Endothelial cell of umbilical vein (primary cell): ENCODE measurements at regions of chr10 and their contacts with region 1.

Region 1: DNA sequence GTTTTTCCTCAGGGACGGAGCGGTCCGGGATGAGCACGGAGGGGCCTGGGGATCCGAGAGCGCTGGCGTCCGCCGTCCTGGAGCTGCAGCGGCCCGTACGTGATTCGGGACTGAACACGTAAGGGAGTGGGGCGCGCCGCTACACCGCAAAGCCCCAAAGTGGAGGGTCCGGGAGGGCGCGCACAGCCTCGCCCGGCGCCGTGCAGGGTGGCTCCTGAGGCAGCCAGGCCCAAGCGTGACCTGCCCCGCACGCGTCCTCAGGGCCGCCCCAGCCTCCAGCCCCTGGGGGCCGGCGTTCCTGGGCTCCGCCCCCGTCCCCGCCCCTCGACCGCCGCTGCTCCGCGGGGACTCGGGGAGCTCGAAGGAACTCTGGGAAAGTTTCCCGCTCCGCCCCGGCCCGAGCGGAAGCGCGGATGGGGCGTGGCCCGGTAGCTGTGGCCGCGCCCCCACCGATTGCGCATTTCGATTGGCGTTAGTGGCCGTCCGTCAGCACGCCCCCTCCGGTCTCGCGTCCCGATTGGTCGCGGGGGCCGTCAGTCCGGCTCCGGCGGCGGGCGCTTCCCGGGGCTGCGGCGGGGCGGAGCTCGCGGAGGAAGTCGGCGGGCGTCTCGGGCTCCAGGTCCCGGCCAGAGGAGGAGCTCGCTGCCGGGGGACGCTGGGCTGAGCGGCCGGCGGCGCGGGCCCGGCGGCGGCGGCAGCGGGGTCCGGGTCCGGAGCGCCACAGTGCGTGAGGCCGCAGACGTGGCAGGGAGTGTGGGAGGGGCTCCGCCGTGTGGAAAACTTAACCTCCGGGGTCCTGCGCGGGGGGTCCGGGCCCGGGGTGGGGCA is at the starts of genes ANKRD16 and FBH1:
- DNase-seq: peak; percentile 99
- H3K4me3 ChIP-seq: peak within 1 kb of the TSS; percentile 16 to 95 (median 62)
- H3K27ac ChIP-seq: peak within 1 kb of the TSS; percentile 44
- H3K4me1 ChIP-seq: peaks cover 36% of the 10 kb centered on the region
- H3K27me3 ChIP-seq: no peaks in the 10 kb centered on the region
- CTCF ChIP-seq: no peak
- POLR2A ChIP-seq: peak; percentile 82
- total RNA-seq, gene ANKRD16: 4.4 and 6.9 TPM in 2 replicates
- total RNA-seq, gene FBH1: 86.1 and 97.0 TPM in 2 replicates

Region 2: GRCh38 chr10:5873515-5873995 is 16.3 kb before region 1 on chr10:
- CTCF ChIA-PET with region 1: interaction called, 18 read pairs
- POLR2A ChIA-PET with region 1: no interaction called
- dilution Hi-C with region 1: no loop called
- intact Hi-C with region 1: no loop called
- DNase-seq: peak; percentile 85
- H3K4me3 ChIP-seq: no peak overlapping the region
- H3K27ac ChIP-seq: no peak overlapping the region
- H3K4me1 ChIP-seq: no peaks in the 10 kb centered on the region
- H3K27me3 ChIP-seq: no peaks in the 10 kb centered on the region
- CTCF ChIP-seq: peak; percentile 55 to 62
- POLR2A ChIP-seq: no peak

Region 3: GRCh38 chr10:5977471-5978229 is 87.8 kb after region 1 on chr10 and contains the start of gene IL15RA:
- CTCF ChIA-PET with region 1: no interaction called
- POLR2A ChIA-PET with region 1: no interaction called
- dilution Hi-C with region 1: no loop called
- intact Hi-C with region 1: loop called (anchors 5 kb)
- DNase-seq: peak; percentile 82
- H3K4me3 ChIP-seq: peak within 1 kb of the TSS; percentile 10 to 98 (median 47)
- H3K27ac ChIP-seq: peak within 1 kb of the TSS; percentile 60
- H3K4me1 ChIP-seq: peaks cover 14% of the 10 kb centered on the region
- H3K27me3 ChIP-seq: peaks cover 0 to 2% of the 10 kb centered on the region in 2 experiments
- CTCF ChIP-seq: peak; percentile 6 to 13
- POLR2A ChIP-seq: no peak
- total RNA-seq, gene IL15RA: 16.1 and 18.8 TPM in 2 replicates

Region 4: DNA sequence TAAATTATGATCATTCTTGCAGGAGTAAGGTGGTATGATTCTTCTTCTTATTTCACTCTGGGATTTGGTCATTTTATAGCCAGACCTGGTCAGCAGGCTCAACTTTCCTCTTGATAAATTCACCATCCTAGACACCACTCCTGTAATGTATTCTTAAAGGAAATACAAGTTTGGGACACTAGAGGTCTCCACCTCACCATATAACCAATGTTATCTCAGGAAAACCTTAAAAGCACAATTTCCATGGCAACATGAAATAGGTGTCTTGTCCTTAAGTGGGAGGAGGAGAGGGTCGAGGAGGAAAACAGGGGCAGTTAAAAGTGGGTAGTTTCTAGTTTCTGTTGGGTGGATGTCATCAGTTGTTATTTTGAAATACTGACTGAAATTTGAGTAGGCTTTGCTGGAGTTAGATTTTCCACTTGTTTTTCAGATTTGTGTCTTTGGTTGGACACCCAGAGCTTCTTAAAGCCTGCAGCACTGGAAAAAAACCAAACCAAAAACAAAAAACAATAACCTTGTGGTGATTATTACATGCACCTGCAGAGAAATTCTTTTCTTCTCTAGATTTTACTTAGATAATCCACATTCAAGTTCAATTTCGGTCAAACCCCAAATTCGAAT is 527.2 kb after region 1 on chr10:
- CTCF ChIA-PET with region 1: no interaction called
- POLR2A ChIA-PET with region 1: no interaction called
- dilution Hi-C with region 1: no loop called
- intact Hi-C with region 1: no loop called
- DNase-seq: peak; percentile 71
- H3K4me3 ChIP-seq: no peak overlapping the region
- H3K27ac ChIP-seq: no peak overlapping the region
- H3K4me1 ChIP-seq: no peaks in the 10 kb centered on the region
- H3K27me3 ChIP-seq: peaks cover 6 to 7% of the 10 kb centered on the region in 2 experiments
- CTCF ChIP-seq: peak; percentile 39 to 44
- POLR2A ChIP-seq: no peak